RWPE1 (cell line): ENCODE measurements at regions of chr16 and their contacts with region 1.

Region 1: GRCh38 chr16:57300387-57301125 is 16.1 kb upstream of the PLLP start:
- DNase-seq: peak; percentile 99
- H3K27ac ChIP-seq: peak overlapping the region; percentile 88
- CTCF ChIP-seq: peak; percentile 94

Region 2: DNA sequence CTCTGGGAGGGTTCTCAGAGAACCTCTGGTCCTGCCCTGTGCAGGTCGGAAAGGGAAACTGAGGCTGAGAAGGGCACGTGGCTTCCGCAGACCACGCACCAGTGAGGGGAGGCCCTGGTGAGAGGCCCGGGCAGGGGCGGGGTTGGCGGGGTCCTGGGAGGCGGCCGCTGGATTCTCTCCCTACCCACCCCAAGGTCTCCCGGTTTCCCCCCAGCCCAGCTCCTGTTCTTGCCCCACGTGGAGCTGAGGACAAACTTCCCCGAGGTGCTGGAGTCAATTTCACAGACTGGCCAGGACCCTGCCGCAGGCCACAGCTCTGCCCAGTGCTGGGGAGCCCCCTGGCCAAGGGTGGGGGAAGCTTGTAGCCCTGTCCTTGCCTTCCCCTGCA is 115.6 kb after region 1 on chr16:
- CTCF ChIA-PET with region 1: interaction called, 67 read pairs
- POLR2A ChIA-PET with region 1: no interaction called
- DNase-seq: no peak
- H3K27ac ChIP-seq: no peak overlapping the region
- CTCF ChIP-seq: no peak

Region 3: GRCh38 chr16:57422026-57422944 is 121.7 kb after region 1 on chr16:
- CTCF ChIA-PET with region 1: interaction called, 67 read pairs
- POLR2A ChIA-PET with region 1: no interaction called
- DNase-seq: peak; percentile 30
- H3K27ac ChIP-seq: no peak overlapping the region
- CTCF ChIP-seq: peak; percentile 60